Stomach (tissue), 19 donors: ENCODE measurements at regions of chr17 and their contacts with region 1.

Region 1: DNA sequence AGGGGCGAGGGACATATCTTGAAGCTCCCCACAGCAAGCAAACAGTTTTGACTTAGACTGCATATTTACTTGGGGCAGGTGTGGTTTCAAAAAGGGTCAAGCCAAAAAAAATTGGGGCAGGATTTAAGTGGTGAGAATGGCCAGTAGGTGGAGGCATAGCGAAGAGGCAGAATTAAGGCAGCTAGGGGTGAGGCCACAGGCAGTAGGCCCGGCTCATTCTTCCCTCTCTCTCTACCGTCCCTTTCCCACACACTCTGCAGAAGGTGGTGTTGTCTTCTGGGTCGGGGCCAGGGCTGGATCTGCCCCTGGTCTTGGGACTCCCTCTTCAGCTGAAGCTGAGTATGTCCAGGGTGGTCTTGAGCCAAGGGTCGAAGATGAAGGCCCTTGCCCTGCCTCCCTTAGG is 2.6 kb downstream of the SHBG start:
- DNase-seq: peak; percentile 31 to 67
- H3K4me3 ChIP-seq: no peak overlapping the region
- H3K27ac ChIP-seq: no peak overlapping the region
- H3K4me1 ChIP-seq: peaks cover 0 to 6% (median 5%) of the 10 kb centered on the region in 4 donors
- H3K27me3 ChIP-seq: no peaks in the 10 kb centered on the region
- CTCF ChIP-seq: peak in 5 of 7 experiments; percentile 8 to 54 (median 33)
- EP300 ChIP-seq: no peak
- POLR2A ChIP-seq: no peak

Region 2: GRCh38 chr17:7687908-7688807 is 55.7 kb after region 1 on chr17 and contains the start of gene WRAP53:
- intact Hi-C with region 1: loop called (anchors 10 kb)
- DNase-seq: peak; percentile 98 to 99
- H3K4me3 ChIP-seq: peak within 1 kb of the TSS; percentile 80 to 95 (median 86)
- H3K27ac ChIP-seq: peak within 1 kb of the TSS; percentile 83 to 98 (median 97)
- H3K4me1 ChIP-seq: peaks cover 22 to 47% (median 35%) of the 10 kb centered on the region in 4 donors
- H3K27me3 ChIP-seq: no peaks in the 10 kb centered on the region
- CTCF ChIP-seq: peak in 6 of 7 experiments; percentile 62 to 100 (median 99)
- EP300 ChIP-seq: no peak
- POLR2A ChIP-seq: no peak
- total RNA-seq, gene WRAP53: 1.8 to 3.9 (median 2.9) TPM